ENCODE measurements at regions of chr11 and their contacts with region 1.

Region 1: DNA sequence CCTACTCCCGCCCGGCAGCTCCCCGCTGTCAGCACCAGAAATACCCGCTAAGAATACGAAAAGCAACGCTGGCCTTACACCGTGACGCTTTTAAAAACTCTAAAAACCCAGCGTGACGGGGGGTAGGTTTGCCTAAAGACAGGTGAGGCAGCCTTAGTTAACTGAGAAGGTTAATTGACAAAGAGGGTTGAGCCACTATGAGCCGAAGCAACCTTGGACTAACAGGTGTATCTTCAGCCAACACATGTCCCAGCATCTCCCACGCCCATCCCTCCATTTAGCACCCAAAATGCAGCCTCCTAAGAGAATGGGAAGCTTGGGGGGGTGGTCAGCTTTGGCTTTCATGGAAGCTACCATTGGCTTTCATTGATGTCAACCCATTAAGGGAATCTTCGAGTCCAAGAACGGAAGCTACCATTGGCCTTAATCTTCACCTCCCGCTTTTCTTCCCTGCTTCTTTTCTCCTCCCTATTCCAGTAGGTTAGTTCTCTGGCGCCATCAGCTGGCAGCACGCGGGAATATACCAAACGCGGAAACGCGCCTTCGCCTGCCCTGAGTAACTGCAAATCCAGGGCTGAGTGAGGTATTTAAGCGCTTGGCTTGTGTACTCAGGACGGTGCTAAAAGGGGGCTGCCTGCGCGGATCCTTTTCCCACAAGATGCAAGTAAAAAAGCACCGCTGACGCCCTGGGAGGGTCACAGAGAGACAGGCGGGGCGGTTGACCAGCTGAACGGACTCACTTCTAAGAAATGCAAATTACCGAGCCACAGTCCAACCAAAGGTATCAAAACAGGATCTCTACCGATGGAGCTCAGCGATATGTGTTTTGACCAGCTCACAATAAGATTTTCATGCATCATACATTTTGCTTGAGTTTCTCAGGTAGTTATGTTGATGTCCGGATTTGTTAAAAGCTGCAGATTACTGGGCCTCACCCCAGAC is 38.5 kb upstream of the GLYATL1 start:
- DNase-seq: peak; percentile 96
- ATAC-seq: peak; percentile 77
- H3K4me3 Mint-ChIP-seq: peak overlapping the region; percentile 62
- H3K27ac Mint-ChIP-seq: peak overlapping the region; percentile 42; the same call in 1 of the 2 replicates
- H3K4me1 Mint-ChIP-seq: peaks cover 45% of the 10 kb centered on the region
- H3K27me3 Mint-ChIP-seq: peaks cover 48% of the 10 kb centered on the region
- CTCF ChIP-seq: peak; percentile 59; the same call in 1 of the 2 replicates

Region 2: DNA sequence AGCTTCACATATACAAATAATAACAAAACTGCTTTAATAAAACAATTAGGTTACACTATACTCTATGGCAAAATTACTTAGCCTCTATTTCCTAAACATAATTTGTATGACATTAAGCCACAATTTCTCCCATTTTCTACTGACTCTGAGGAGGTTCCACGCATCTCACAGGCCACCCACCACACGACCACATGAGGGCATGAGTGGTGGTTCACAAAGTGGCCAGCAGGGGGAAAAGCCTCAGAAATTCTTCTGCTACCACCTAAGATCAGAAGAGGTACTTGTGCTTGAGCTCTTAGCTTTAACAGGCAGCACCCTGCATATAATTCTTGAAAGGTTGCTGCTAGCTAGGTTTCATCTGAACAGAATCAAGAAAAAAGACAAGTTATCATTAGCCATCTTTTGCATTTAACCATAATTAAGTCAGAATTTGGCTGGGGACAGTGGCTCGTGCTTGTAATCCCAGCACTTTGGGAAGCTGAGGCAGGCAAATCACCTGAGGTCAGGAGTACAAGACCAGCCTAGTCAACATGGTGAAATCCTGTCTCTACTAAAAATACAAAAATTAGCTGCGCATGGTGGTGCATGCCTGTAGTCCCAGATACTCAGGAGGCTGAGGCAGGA is 332.7 kb before region 1 on chr11:
- CTCF ChIA-PET with region 1: interaction called, 12 read pairs
- POLR2A ChIA-PET with region 1: no interaction called
- DNase-seq: peak; percentile 69
- ATAC-seq: peak; percentile 88
- H3K4me3 Mint-ChIP-seq: no peak overlapping the region
- H3K27ac Mint-ChIP-seq: no peak overlapping the region
- H3K4me1 Mint-ChIP-seq: no peaks in the 10 kb centered on the region
- H3K27me3 Mint-ChIP-seq: no peaks in the 10 kb centered on the region
- CTCF ChIP-seq: peak; percentile 73

Region 3: GRCh38 chr11:58629857-58630256 is 270.9 kb before region 1 on chr11:
- CTCF ChIA-PET with region 1: interaction called, 14 read pairs
- POLR2A ChIA-PET with region 1: no interaction called
- DNase-seq: no peak
- ATAC-seq: peak; percentile 85
- H3K4me3 Mint-ChIP-seq: no peak overlapping the region
- H3K27ac Mint-ChIP-seq: no peak overlapping the region
- H3K4me1 Mint-ChIP-seq: peaks cover 2% of the 10 kb centered on the region
- H3K27me3 Mint-ChIP-seq: no peaks in the 10 kb centered on the region
- CTCF ChIP-seq: no peak; the same call in 1 of the 2 replicates

Region 4: GRCh38 chr11:58654079-58654907 is 246.5 kb before region 1 on chr11:
- CTCF ChIA-PET with region 1: interaction called, 26 read pairs
- POLR2A ChIA-PET with region 1: interaction called, 3 read pairs
- DNase-seq: peak; percentile 86
- ATAC-seq: peak; percentile 97
- H3K4me3 Mint-ChIP-seq: no peak overlapping the region
- H3K27ac Mint-ChIP-seq: no peak overlapping the region
- H3K4me1 Mint-ChIP-seq: peaks cover 26% of the 10 kb centered on the region
- H3K27me3 Mint-ChIP-seq: no peaks in the 10 kb centered on the region; the same call in 1 of the 2 replicates
- CTCF ChIP-seq: peak; percentile 73

Region 5: GRCh38 chr11:58923300-58923788 is 22.6 kb after region 1 on chr11:
- CTCF ChIA-PET with region 1: interaction called, 55 read pairs
- POLR2A ChIA-PET with region 1: interaction called, 15 read pairs
- DNase-seq: peak; percentile 43
- ATAC-seq: peak; percentile 56
- H3K4me3 Mint-ChIP-seq: peak overlapping the region; percentile 63
- H3K27ac Mint-ChIP-seq: peak overlapping the region; percentile 94
- H3K4me1 Mint-ChIP-seq: peaks cover 48% of the 10 kb centered on the region
- H3K27me3 Mint-ChIP-seq: peaks cover under 1% of the 10 kb centered on the region; the same call in 1 of the 2 replicates
- CTCF ChIP-seq: no peak

Region 6: DNA sequence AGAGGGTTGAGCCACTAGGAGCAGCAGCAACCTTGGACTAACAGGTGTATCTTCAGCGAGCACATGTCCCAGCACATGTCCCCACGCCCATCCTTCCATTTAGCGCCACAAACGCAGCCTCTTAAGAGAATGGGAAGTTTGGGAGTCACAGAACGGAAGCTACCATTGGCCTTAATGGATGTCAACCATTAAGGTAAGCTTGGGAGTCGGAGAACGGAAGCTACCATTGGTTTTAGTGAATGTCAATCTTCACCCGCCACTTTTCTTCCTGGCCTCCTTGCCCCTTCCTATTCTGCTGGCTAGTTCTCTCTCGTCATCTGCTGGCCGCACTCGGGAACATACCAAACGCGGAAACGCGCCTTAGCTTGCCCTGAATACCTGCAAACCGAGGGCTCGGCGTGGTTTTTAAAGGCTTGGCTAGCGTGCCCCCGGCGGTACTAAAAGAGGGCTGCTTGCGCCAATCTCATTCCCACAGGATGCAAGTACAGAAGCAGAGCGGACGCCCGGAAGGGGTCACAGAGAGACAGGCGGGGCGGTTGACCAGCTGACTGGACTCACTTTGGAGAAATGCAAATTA is 62.9 kb after region 1 on chr11:
- CTCF ChIA-PET with region 1: interaction called, 28 read pairs
- POLR2A ChIA-PET with region 1: interaction called, 3 read pairs
- DNase-seq: peak; percentile 74
- ATAC-seq: peak; percentile 94
- H3K4me3 Mint-ChIP-seq: peak overlapping the region; percentile 64
- H3K27ac Mint-ChIP-seq: peak overlapping the region; percentile 78; the same call in 1 of the 2 replicates
- H3K4me1 Mint-ChIP-seq: peaks cover 26% of the 10 kb centered on the region
- H3K27me3 Mint-ChIP-seq: peaks cover 65% of the 10 kb centered on the region
- CTCF ChIP-seq: no peak

Measured in WTC11 (cell line).